Heart right ventricle (tissue), 16 donors: ENCODE measurements at regions of chr4 and their contacts with region 1.

Region 1: GRCh38 chr4:76931087-76931486 is 18.5 kb upstream of the SEPTIN11 start:
- DNase-seq: no peak
- ATAC-seq: no peak
- H3K4me3 ChIP-seq: no peak overlapping the region
- H3K27ac ChIP-seq: no peak overlapping the region
- H3K4me1 ChIP-seq: no peaks in the 10 kb centered on the region
- H3K27me3 ChIP-seq: no peaks in the 10 kb centered on the region
- CTCF ChIP-seq: no peak

Region 2: GRCh38 chr4:76680952-76681351 is 250.1 kb before region 1 on chr4:
- intact Hi-C with region 1: no loop called
- DNase-seq: no peak
- ATAC-seq: peak in 1 of 8 donors; percentile 25
- H3K4me3 ChIP-seq: no peak overlapping the region
- H3K27ac ChIP-seq: no peak overlapping the region
- H3K4me1 ChIP-seq: peaks cover 0 to 8% (median 0%) of the 10 kb centered on the region in 9 donors
- H3K27me3 ChIP-seq: peaks cover 0 to 15% (median 0%) of the 10 kb centered on the region in 7 donors
- CTCF ChIP-seq: no peak

Region 3: DNA sequence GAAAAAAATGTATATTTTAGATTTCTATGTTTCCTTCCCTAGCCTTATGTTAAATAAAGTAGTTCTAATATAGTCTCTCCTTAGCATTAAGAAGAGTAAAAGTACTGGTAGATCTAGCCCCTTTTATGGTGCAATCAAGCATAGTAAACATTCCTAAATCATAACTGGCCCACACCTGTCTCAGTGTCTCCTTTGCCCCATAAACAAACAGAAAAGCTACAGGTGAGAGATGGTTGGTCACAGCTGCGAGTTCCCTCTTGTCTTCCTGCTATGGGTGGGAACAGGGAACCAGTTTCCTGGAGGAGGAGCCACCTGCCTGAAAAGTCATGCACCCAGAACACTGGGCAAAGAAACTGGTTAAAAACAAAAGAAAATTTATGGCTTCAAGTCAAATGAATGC is 49.7 kb before region 1 on chr4:
- intact Hi-C with region 1: loop called in 1 of 10 experiments (anchors 10 kb)
- DNase-seq: no peak
- ATAC-seq: no peak
- H3K4me3 ChIP-seq: no peak overlapping the region
- H3K27ac ChIP-seq: no peak overlapping the region
- H3K4me1 ChIP-seq: no peaks in the 10 kb centered on the region
- H3K27me3 ChIP-seq: peaks cover 0 to 11% (median 5%) of the 10 kb centered on the region in 7 donors
- CTCF ChIP-seq: no peak

Region 4: GRCh38 chr4:77473509-77473908 is 542.4 kb after region 1 on chr4:
- intact Hi-C with region 1: no loop called
- DNase-seq: no peak
- ATAC-seq: no peak
- H3K4me3 ChIP-seq: no peak overlapping the region
- H3K27ac ChIP-seq: no peak overlapping the region
- H3K4me1 ChIP-seq: no peaks in the 10 kb centered on the region
- H3K27me3 ChIP-seq: no peaks in the 10 kb centered on the region
- CTCF ChIP-seq: peak in 2 of 9 donors; percentile 7 to 17